Psoas muscle (tissue), 8 donors: ENCODE measurements at regions of chr1 and their contacts with region 1.

Region 1: DNA sequence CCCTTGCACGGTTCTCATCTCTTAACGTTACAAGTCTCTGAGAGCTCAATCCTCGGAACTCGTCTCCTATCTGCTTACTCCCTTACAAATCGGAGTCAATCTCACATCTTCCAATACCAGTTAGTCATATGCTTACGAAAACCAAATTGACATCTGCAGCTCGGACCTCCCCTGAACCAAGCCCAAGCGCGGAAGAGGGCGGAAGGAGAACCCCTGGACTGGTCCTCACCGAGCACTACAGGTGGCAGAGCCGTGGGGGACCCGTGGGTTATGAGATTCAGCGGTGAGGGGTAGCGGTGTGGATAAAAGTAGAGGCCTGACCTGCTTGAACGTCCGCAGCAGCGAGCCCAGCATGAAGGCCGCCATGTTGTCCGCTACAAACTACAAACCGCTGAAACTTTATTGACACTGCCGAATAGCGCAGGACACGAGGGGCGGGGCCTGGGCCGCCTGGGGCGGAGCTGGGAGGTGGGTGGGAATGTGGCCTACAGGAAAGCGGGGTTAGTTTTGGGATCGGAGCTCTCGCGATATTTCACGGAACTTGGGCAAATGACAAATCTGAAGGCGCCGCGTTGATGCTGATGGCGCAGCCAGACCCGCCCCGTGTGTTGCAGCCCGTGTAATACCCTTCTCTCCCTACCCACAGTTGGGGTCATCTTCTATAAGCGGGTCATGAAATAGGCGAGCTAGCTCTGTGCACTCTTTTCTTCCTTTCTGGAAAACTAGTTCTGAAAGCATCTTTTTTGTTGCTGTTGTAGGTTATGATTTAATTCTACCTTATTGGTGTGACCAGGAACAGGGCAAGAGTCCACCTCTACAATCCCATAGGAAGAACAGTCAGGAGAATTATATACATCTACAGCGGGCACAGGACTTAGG is at the start of gene MRPS14:
- DNase-seq: peak; percentile 98
- ATAC-seq: peak; percentile 99 to 100 (median 100)
- H3K4me3 ChIP-seq: peak within 1 kb of the TSS; percentile 98
- H3K27ac ChIP-seq: peak within 1 kb of the TSS; percentile 93
- H3K4me1 ChIP-seq: peaks cover 11% of the 10 kb centered on the region
- H3K27me3 ChIP-seq: no peaks in the 10 kb centered on the region
- CTCF ChIP-seq: no peak
- total RNA-seq, gene MRPS14: 21.6 to 27.4 (median 24.3) TPM

Region 2: DNA sequence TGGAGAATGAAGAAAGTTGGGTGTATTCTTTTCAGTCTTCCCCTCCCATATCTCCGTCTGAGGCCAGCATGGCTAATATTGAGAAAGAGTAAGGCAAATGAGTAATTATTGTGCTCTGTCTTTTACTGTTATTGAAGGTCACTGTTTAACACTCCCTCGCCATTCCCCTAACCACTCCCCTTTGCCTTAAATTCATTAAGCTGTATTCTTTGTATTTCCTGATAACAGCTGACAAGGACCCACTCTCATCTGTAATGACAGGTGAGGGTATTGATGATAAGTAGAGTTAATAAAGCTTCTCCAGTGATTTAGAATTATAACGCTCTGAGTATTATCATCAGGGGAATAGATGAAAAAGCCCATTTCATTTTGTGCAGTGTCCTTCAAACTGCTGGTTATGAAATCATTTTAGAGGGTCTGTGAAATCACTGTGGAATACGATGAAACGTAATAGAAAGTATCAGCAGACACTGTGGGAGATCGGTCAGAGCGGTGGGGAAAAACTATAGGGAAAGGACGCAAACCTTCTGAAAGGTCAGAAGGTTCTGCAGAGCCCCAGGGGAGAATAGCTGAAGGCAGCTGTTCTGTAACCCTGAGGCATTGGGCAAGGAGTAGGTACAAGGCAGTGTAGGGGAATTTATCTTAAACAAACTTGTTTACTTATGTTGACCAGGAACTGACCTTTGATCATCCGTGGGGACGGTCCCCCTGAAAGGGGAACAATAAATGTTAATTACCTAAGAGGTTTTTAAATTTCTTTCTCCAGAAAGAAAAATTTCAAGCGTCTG is 69.8 kb before region 1 on chr1:
- intact Hi-C with region 1: no loop called
- DNase-seq: no peak
- ATAC-seq: no peak
- H3K4me3 ChIP-seq: no peak overlapping the region
- H3K27ac ChIP-seq: no peak overlapping the region
- H3K4me1 ChIP-seq: no peaks in the 10 kb centered on the region
- H3K27me3 ChIP-seq: no peaks in the 10 kb centered on the region
- CTCF ChIP-seq: no peak

Region 3: DNA sequence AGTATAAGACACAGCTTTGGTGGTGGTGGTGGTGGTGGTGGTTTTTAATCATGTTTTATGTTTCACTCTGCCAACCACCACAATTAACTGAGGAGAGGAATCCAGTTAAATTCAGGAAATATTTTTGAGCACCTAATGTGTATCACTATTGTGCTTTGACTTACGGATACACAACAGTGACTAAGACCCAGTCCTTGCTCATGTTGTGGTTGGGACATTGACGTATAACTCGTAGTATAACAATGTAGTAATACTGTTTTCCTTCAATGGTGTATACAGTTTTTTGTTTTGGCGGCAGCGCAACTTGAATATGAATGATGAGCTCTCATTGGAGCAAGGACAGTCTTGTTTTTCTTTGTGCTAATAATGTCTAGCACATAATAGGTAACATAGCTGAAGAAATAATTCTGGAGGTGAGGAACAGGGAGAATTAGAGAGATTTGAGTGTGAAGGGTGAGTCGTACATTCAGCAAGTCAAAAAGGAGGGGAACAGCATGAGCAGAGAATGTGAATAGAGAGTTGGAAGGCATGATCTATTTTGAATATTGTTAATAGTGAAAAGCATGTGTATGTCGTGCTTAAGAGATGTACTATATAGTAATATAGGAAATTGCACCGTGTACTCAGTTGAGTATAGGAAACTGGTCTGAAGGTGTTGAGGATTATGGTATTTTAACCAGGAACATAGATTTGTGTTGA is 18.0 kb before region 1 on chr1:
- intact Hi-C with region 1: loop called in 1 of 2 experiments (anchors 2 kb)
- DNase-seq: no peak
- ATAC-seq: no peak
- H3K4me3 ChIP-seq: no peak overlapping the region
- H3K27ac ChIP-seq: no peak overlapping the region
- H3K4me1 ChIP-seq: peaks cover 36% of the 10 kb centered on the region
- H3K27me3 ChIP-seq: no peaks in the 10 kb centered on the region
- CTCF ChIP-seq: no peak

Region 4: GRCh38 chr1:175078629-175079028 is 55.3 kb after region 1 on chr1:
- intact Hi-C with region 1: no loop called
- DNase-seq: no peak
- ATAC-seq: no peak
- H3K4me3 ChIP-seq: no peak overlapping the region
- H3K27ac ChIP-seq: no peak overlapping the region
- H3K4me1 ChIP-seq: no peaks in the 10 kb centered on the region
- H3K27me3 ChIP-seq: no peaks in the 10 kb centered on the region
- CTCF ChIP-seq: no peak

Region 5: DNA sequence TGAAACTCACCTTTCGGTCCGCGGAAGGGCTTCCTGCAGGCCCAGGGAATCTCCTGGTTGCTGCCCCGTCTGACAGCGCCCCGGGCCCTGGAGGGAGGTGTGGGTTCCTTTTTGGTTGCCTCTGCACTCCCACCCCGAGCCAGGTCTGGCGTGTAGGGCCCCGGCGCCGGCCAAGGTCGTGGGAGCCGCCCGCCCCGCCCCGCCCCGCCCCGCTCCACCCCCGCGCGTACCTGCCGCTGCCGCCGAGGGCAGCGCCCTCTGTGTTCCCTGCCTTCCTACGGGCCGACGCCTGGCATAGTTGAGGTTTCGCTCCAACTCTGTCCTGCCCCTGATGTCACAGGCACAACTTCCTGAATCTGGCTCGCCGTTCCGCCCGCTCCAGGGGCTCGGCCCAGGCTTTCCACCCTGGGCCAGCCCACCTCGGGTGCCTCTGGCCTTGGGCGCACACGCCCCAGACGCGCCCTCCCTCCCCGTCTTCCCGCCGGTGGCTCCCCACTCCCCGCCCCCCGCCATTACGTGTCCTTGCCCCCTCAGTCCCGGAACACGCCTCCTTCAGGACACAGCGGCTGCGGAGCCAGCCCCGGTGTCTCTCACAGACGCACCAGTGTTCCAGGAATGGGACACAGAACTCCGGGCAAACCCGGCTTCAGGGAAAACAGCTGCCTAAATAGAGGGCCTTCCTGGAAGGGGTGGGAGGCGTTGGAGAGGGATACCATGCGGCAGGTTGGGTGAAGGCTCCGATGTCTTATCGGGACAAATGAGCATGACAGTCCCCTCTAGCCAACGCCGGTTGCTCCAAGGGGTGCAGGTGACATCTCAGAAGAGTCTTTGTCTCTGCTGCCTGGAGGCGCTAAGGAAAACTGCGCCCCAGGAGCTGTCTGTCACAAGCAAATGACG is 169.6 kb after region 1 on chr1 and contains the start of gene KIAA0040:
- intact Hi-C with region 1: loop called in 1 of 2 experiments (anchors 10 kb)
- DNase-seq: peak; percentile 81 to 88
- ATAC-seq: peak; percentile 83 to 84 (median 84)
- H3K4me3 ChIP-seq: peak within 1 kb of the TSS; percentile 86
- H3K27ac ChIP-seq: peak within 1 kb of the TSS; percentile 72
- H3K4me1 ChIP-seq: peaks cover 28% of the 10 kb centered on the region
- H3K27me3 ChIP-seq: no peaks in the 10 kb centered on the region
- CTCF ChIP-seq: no peak
- total RNA-seq, gene KIAA0040: 6.2 to 18.4 (median 14.6) TPM

Region 6: GRCh38 chr1:175319418-175320230 is 296.3 kb after region 1 on chr1:
- intact Hi-C with region 1: loop called in 1 of 2 experiments (anchors 5 kb)
- DNase-seq: peak; percentile 75 to 87
- ATAC-seq: peak; percentile 92 to 95 (median 92)
- H3K4me3 ChIP-seq: no peak overlapping the region
- H3K27ac ChIP-seq: no peak overlapping the region
- H3K4me1 ChIP-seq: peaks cover 4% of the 10 kb centered on the region
- H3K27me3 ChIP-seq: no peaks in the 10 kb centered on the region
- CTCF ChIP-seq: peak; percentile 95

Region 7: GRCh38 chr1:176211396-176212165 is 1188.3 kb after region 1 on chr1:
- intact Hi-C with region 1: loop called in 1 of 2 experiments (anchors 10 kb)
- DNase-seq: no peak
- ATAC-seq: no peak
- H3K4me3 ChIP-seq: no peak overlapping the region
- H3K27ac ChIP-seq: no peak overlapping the region
- H3K4me1 ChIP-seq: peaks cover 6% of the 10 kb centered on the region
- H3K27me3 ChIP-seq: no peaks in the 10 kb centered on the region
- CTCF ChIP-seq: no peak